ENCODE measurements at regions of chr12 and their contacts with region 1.

Region 1: GRCh38 chr12:40010899-40011774 is 94.7 kb downstream of the SLC2A13 start:
- DNase-seq: peak; percentile 63
- H3K4me3 ChIP-seq: peak overlapping the region in 1 of 3 experiments; percentile 30
- H3K27ac ChIP-seq: no peak overlapping the region
- H3K4me1 ChIP-seq: no peaks in the 10 kb centered on the region
- H3K27me3 ChIP-seq: no peaks in the 10 kb centered on the region
- CTCF ChIP-seq: peak; percentile 72 to 76
- POLR2A ChIP-seq: no peak

Region 2: GRCh38 chr12:39990122-39991101 is 20.7 kb before region 1 on chr12:
- CTCF ChIA-PET with region 1: interaction called, 45 read pairs
- POLR2A ChIA-PET with region 1: no interaction called
- dilution Hi-C with region 1: no loop called
- intact Hi-C with region 1: no loop called
- DNase-seq: peak; percentile 65
- H3K4me3 ChIP-seq: no peak overlapping the region
- H3K27ac ChIP-seq: no peak overlapping the region
- H3K4me1 ChIP-seq: no peaks in the 10 kb centered on the region
- H3K27me3 ChIP-seq: no peaks in the 10 kb centered on the region
- CTCF ChIP-seq: peak; percentile 83 to 85
- POLR2A ChIP-seq: no peak

Region 3: GRCh38 chr12:40063414-40063813 is 52.3 kb after region 1 on chr12:
- CTCF ChIA-PET with region 1: interaction called, 13 read pairs
- POLR2A ChIA-PET with region 1: no interaction called
- dilution Hi-C with region 1: no loop called
- intact Hi-C with region 1: no loop called
- DNase-seq: no peak
- H3K4me3 ChIP-seq: no peak overlapping the region
- H3K27ac ChIP-seq: no peak overlapping the region
- H3K4me1 ChIP-seq: no peaks in the 10 kb centered on the region
- H3K27me3 ChIP-seq: no peaks in the 10 kb centered on the region
- CTCF ChIP-seq: no peak
- POLR2A ChIP-seq: no peak

Region 4: DNA sequence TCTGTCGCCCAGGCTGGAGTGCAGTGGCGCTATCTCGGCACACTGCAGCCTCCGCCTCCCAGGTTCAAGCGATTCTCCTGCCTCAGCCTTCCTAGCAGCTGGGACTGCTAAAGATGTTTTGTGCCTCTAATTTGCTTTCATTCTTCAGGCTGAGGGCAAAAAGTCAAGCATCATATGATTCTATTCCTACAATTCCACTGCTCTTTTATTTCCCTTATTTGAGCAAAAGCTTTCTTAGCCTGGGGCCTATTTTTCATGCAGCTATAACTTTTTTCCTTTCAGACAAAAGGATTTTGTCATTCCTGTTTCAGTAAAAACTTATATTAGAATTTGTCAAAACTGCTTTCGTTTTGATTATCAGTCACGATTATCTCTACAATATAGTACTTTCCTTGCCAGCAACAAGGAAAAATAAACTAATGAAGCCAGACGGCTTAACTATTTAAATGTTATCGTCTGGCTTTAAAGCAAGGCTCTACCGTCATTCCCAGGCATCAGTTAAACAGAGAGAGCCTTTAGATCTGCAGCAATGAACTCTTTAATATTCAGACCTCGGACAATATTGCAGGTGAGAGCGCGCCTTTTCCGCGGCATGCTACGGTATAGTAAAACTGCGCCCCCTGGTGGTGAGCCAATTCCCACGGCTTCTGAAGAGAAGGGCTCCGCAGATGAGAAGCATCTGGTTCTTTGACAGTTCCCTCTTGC is 96.1 kb after region 1 on chr12:
- CTCF ChIA-PET with region 1: interaction called, 189 read pairs
- POLR2A ChIA-PET with region 1: interaction called, 4 read pairs
- dilution Hi-C with region 1: no loop called
- intact Hi-C with region 1: loop called (anchors 1 kb)
- DNase-seq: peak; percentile 72
- H3K4me3 ChIP-seq: peak overlapping the region in 2 of 3 experiments; percentile 17 to 67
- H3K27ac ChIP-seq: no peak overlapping the region
- H3K4me1 ChIP-seq: peaks cover 14% of the 10 kb centered on the region
- H3K27me3 ChIP-seq: no peaks in the 10 kb centered on the region
- CTCF ChIP-seq: peak; percentile 85 to 92
- POLR2A ChIP-seq: no peak

Region 5: DNA sequence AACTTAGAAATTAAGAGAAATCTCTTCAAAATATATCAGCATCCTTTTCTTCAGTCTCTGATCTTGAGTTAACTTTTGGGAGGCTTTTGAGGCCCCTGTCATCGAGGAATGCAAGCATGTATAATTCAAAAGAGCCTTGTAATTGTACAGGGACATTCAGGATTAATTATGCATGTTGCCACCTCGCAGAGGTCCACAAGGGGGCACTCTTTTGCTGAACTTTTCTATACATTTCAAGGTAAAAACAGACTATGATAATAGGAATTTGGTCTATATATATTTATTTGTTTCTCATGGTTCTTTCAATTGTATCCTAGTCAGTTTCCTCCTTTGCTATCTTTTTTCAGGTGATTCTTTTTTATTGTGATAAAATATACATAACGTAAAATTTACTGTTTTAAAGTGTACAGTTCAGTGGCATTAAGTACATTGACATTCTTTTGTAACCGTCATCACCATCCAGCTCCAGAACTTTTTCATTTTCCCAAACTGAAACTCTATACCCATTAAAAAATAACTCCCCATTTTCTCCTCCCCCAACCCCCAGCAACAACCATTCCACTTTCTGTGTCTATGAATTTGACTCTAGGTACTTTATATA is 141.7 kb after region 1 on chr12:
- CTCF ChIA-PET with region 1: interaction called, 4 read pairs
- POLR2A ChIA-PET with region 1: no interaction called
- dilution Hi-C with region 1: no loop called
- intact Hi-C with region 1: loop called (anchors 1 kb)
- DNase-seq: peak; percentile 68
- H3K4me3 ChIP-seq: no peak overlapping the region
- H3K27ac ChIP-seq: no peak overlapping the region
- H3K4me1 ChIP-seq: peaks cover 4% of the 10 kb centered on the region
- H3K27me3 ChIP-seq: no peaks in the 10 kb centered on the region
- CTCF ChIP-seq: peak; percentile 55 to 68
- POLR2A ChIP-seq: no peak

Measured in endothelial cell of umbilical vein (primary cell).